Naive thymus-derived CD4-positive, alpha-beta T cell (primary cell): ENCODE measurements at regions of chr1 and their contacts with region 1.

Region 1: GRCh38 chr1:150561974-150562445 is 12.8 kb downstream of the ADAMTSL4 start:
- DNase-seq: peak; percentile 67 to 89 (median 83)
- ATAC-seq: peak; percentile 58
- H3K4me3 ChIP-seq: peak overlapping the region; percentile 95
- H3K4me3 Mint-ChIP-seq: peak overlapping the region; percentile 87 to 99 (median 97)
- H3K27ac ChIP-seq: peak overlapping the region; percentile 97
- H3K27ac Mint-ChIP-seq: peak overlapping the region; percentile 94 to 100 (median 98)
- H3K4me1 ChIP-seq: peaks cover 47 to 57% of the 10 kb centered on the region in 2 donors
- H3K4me1 Mint-ChIP-seq: peaks cover 26 to 59% (median 51%) of the 10 kb centered on the region in 7 donors
- H3K27me3 ChIP-seq: no peaks in the 10 kb centered on the region
- H3K27me3 Mint-ChIP-seq: no peaks in the 10 kb centered on the region

Region 2: DNA sequence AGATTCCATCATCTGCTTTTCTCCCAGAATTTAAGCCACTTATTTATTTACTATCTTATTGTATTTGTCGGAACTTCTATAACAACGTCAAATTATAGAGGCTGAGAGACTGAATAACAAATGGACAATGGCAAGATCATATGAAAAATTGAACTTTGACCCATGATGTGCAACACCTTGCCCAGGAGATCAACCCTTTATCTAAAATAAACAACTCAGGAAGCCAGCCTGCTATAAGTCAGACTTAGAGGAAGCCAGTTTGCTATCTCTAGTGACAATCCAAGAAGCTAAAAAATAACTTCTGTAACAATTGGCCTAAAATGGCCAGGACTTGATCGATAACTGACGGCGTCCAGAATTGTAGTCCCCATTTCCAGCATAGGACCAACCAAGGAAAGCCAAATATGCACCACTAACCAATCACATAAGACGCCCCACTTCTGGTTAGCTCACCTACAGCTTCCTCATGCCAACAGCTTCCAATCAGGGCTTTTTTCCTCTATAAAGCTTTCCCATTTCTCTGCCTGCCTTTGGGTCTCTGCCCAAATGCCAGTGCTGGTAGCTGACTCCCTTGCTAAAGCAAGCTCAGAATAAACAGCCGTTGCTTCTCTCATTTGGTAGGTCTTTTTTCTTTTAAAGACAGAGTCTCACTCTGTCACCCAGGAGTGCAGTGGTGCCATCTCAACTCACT is 354.6 kb before region 1 on chr1:
- CTCF ChIA-PET with region 1: no interaction called
- POLR2A ChIA-PET with region 1: no interaction called
- intact Hi-C with region 1: no loop called
- DNase-seq: no peak
- ATAC-seq: no peak
- H3K4me3 ChIP-seq: no peak overlapping the region
- H3K4me3 Mint-ChIP-seq: no peak overlapping the region
- H3K27ac ChIP-seq: no peak overlapping the region
- H3K27ac Mint-ChIP-seq: no peak overlapping the region
- H3K4me1 ChIP-seq: no peaks in the 10 kb centered on the region
- H3K4me1 Mint-ChIP-seq: no peaks in the 10 kb centered on the region
- H3K27me3 ChIP-seq: no peaks in the 10 kb centered on the region
- H3K27me3 Mint-ChIP-seq: peaks cover 0 to 30% (median 0%) of the 10 kb centered on the region in 5 donors

Region 3: GRCh38 chr1:150464422-150464826 is 97.6 kb before region 1 on chr1:
- CTCF ChIA-PET with region 1: interaction called, 4 read pairs
- POLR2A ChIA-PET with region 1: interaction called, 3 read pairs
- intact Hi-C with region 1: loop called (anchors 1 kb)
- DNase-seq: peak; percentile 36 to 76 (median 70)
- ATAC-seq: peak; percentile 90
- H3K4me3 ChIP-seq: no peak overlapping the region
- H3K4me3 Mint-ChIP-seq: peak overlapping the region in 1 of 10 donors; percentile 29
- H3K27ac ChIP-seq: no peak overlapping the region
- H3K27ac Mint-ChIP-seq: peak overlapping the region in 7 of 9 donors; percentile 12 to 86 (median 52)
- H3K4me1 ChIP-seq: no peaks in the 10 kb centered on the region
- H3K4me1 Mint-ChIP-seq: peaks cover 0 to 5% (median 5%) of the 10 kb centered on the region in 7 donors
- H3K27me3 ChIP-seq: no peaks in the 10 kb centered on the region
- H3K27me3 Mint-ChIP-seq: no peaks in the 10 kb centered on the region

Region 4: DNA sequence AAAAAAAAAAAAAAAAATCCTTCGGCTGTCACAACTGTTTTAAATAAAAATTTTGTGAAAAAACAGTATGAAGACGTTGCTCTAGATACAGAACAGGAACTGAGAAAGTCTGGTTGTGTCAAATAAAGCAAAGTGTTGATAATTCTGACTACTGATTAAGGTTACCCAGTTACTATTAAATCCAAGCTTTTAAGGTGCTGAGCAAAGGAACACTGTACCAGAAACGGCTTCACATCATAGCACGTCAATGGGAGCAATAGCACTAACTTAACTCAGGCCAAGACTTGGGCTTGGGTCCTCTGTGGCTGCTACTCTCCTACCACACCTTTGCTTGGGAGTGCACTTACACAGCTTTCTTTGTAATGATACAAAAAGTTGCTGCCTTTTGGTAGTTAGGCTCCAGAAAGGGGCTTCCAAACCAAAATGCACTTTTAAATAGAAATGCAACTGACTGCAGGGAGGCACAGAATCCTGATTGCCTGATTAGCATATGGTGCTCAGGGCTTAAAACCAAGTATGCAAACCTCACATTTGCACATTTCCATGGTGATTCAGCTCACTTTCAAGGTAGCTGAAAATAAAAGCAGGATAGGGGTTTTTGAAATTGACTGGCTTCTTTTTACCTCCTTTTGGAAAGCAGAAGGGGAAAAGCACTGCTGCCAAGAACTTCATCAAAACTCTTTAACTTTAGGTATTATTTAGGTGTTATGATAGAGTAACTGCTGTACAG is 11.1 kb after region 1 on chr1:
- CTCF ChIA-PET with region 1: interaction called, 300 read pairs
- POLR2A ChIA-PET with region 1: interaction called, 1,237 read pairs
- intact Hi-C with region 1: loop called (anchors 1 kb)
- DNase-seq: no peak
- ATAC-seq: peak; percentile 1
- H3K4me3 ChIP-seq: peak overlapping the region; percentile 56
- H3K4me3 Mint-ChIP-seq: peak overlapping the region; percentile 88 to 99 (median 94)
- H3K27ac ChIP-seq: peak overlapping the region; percentile 97
- H3K27ac Mint-ChIP-seq: peak overlapping the region; percentile 81 to 99 (median 97)
- H3K4me1 ChIP-seq: peaks cover 58 to 72% of the 10 kb centered on the region in 2 donors
- H3K4me1 Mint-ChIP-seq: peaks cover 40 to 75% (median 59%) of the 10 kb centered on the region in 7 donors
- H3K27me3 ChIP-seq: no peaks in the 10 kb centered on the region
- H3K27me3 Mint-ChIP-seq: peaks cover 0 to 5% (median 0%) of the 10 kb centered on the region in 5 donors

Region 5: GRCh38 chr1:150621497-150622302 is 59.7 kb after region 1 on chr1:
- CTCF ChIA-PET with region 1: interaction called, 272 read pairs
- POLR2A ChIA-PET with region 1: interaction called, 254 read pairs
- intact Hi-C with region 1: loop called (anchors 1 kb)
- DNase-seq: peak in 7 of 9 donors; percentile 53 to 74 (median 65)
- ATAC-seq: peak; percentile 78
- H3K4me3 ChIP-seq: no peak overlapping the region
- H3K4me3 Mint-ChIP-seq: peak overlapping the region in 8 of 10 donors; percentile 16 to 64 (median 46)
- H3K27ac ChIP-seq: peak overlapping the region; percentile 49
- H3K27ac Mint-ChIP-seq: peak overlapping the region; percentile 48 to 91 (median 83)
- H3K4me1 ChIP-seq: peaks cover 5 to 32% of the 10 kb centered on the region in 2 donors
- H3K4me1 Mint-ChIP-seq: peaks cover 17 to 65% (median 51%) of the 10 kb centered on the region in 7 donors
- H3K27me3 ChIP-seq: no peaks in the 10 kb centered on the region
- H3K27me3 Mint-ChIP-seq: no peaks in the 10 kb centered on the region

Region 6: GRCh38 chr1:150841626-150842025 is 279.6 kb after region 1 on chr1:
- CTCF ChIA-PET with region 1: no interaction called
- POLR2A ChIA-PET with region 1: no interaction called
- intact Hi-C with region 1: loop called in 1 of 2 experiments (anchors 5 kb)
- DNase-seq: peak in 7 of 9 donors; percentile 54 to 82 (median 70)
- ATAC-seq: peak; percentile 93
- H3K4me3 ChIP-seq: no peak overlapping the region
- H3K4me3 Mint-ChIP-seq: peak overlapping the region in 9 of 10 donors; percentile 10 to 66 (median 49)
- H3K27ac ChIP-seq: peak overlapping the region; percentile 63
- H3K27ac Mint-ChIP-seq: peak overlapping the region; percentile 49 to 94 (median 86)
- H3K4me1 ChIP-seq: peaks cover 0 to 29% of the 10 kb centered on the region in 2 donors
- H3K4me1 Mint-ChIP-seq: peaks cover 27 to 57% (median 49%) of the 10 kb centered on the region in 7 donors
- H3K27me3 ChIP-seq: no peaks in the 10 kb centered on the region
- H3K27me3 Mint-ChIP-seq: no peaks in the 10 kb centered on the region

Region 7: DNA sequence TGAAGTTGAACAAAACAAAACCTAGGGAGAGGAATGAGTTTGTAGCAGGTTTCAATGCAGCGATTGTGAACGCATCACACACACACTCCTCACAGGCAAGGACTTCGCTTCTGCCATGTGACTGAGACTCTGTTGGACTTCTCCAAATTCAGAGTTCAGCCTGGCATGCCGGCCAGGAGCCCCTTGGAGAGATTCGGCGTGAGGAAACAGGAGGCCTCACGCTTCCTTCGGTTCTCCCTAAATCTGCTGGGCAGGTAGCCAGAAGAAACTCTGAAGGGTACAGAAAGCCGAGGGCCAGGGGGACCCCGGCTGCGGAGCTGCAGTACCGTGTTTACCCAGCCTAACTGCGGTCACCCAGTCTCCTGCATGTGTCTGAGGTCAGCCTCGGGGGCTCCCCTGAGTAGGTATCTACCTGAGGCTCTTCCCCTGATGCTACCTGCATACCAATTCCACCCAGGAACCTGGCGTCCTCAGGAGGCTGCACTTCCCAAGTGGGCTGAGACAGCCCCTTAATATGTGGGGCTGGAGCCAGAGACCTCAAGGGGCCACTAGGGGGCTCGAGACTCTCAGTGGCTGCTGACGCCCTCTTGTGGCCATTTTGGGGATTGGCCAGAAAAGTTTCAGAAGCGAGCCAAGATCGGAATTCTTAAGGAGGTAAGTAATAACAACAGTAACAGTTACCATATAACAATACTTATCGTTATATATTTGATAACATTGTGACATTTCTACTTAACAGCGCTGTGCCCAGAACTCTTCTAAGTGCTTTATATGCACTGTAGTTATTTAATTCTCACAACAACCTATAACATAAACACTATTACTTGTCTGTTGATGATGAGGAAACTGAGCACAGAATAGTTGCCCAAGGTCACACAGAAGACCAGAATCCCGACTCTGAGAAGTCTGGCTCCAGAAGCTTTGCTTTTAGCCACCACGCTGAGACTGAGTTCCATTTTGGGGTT is 417.4 kb after region 1 on chr1:
- CTCF ChIA-PET with region 1: no interaction called
- POLR2A ChIA-PET with region 1: interaction called, 4 read pairs
- intact Hi-C with region 1: loop called in 1 of 2 experiments (anchors 10 kb)
- DNase-seq: peak; percentile 68 to 93 (median 84)
- ATAC-seq: peak; percentile 81
- H3K4me3 ChIP-seq: peak overlapping the region; percentile 39
- H3K4me3 Mint-ChIP-seq: peak overlapping the region in 9 of 10 donors; percentile 39 to 73 (median 61)
- H3K27ac ChIP-seq: peak overlapping the region; percentile 67
- H3K27ac Mint-ChIP-seq: peak overlapping the region; percentile 9 to 83 (median 62)
- H3K4me1 ChIP-seq: peaks cover 24 to 34% of the 10 kb centered on the region in 2 donors
- H3K4me1 Mint-ChIP-seq: peaks cover 14 to 44% (median 37%) of the 10 kb centered on the region in 7 donors
- H3K27me3 ChIP-seq: no peaks in the 10 kb centered on the region
- H3K27me3 Mint-ChIP-seq: no peaks in the 10 kb centered on the region

Region 8: DNA sequence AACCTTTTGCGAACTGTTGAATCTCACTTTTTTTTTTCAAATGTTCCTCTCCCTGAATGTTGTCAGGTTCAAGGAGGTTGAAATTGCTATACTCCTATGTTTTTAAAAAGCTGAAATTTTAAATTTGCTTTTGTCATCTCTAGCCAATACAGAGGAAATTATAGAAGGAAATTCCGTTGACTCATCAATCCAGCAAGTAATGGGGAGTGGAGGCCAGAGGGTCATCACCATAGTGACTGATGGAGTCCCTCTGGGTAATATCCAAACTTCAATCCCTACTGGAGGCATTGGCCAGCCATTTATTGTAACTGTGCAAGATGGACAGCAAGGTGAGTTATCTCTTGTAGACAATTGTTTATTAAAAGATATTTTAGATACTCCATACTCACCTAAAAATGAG is 544.9 kb after region 1 on chr1:
- CTCF ChIA-PET with region 1: no interaction called
- POLR2A ChIA-PET with region 1: no interaction called
- intact Hi-C with region 1: no loop called
- DNase-seq: no peak
- ATAC-seq: no peak
- H3K4me3 ChIP-seq: no peak overlapping the region
- H3K4me3 Mint-ChIP-seq: no peak overlapping the region
- H3K27ac ChIP-seq: no peak overlapping the region
- H3K27ac Mint-ChIP-seq: no peak overlapping the region
- H3K4me1 ChIP-seq: no peaks in the 10 kb centered on the region
- H3K4me1 Mint-ChIP-seq: no peaks in the 10 kb centered on the region
- H3K27me3 ChIP-seq: no peaks in the 10 kb centered on the region
- H3K27me3 Mint-ChIP-seq: no peaks in the 10 kb centered on the region

Region 9: DNA sequence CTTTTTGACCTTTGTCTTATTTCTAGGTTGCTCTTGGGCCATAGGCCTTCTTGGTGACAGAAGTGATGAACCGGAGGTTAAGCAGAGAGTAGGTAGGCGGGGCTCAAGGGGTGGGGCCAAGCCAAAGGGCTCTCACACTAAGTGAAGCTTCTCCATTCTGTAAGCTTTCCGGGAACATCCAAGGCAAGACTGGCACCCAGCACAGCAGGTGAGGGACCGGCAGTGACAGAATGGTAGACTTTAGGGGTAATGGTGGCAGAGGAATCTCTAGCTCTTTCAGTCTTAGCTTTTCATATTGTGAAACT is 594.5 kb after region 1 on chr1 and contains the start of gene TNFAIP8L2:
- CTCF ChIA-PET with region 1: interaction called, 5 read pairs
- POLR2A ChIA-PET with region 1: interaction called, 3 read pairs
- intact Hi-C with region 1: loop called in 1 of 2 experiments (anchors 1 kb)
- DNase-seq: peak in 7 of 9 donors; percentile 50 to 75 (median 66)
- ATAC-seq: peak; percentile 90
- H3K4me3 ChIP-seq: peak within 1 kb of the TSS; percentile 98
- H3K4me3 Mint-ChIP-seq: peak within 1 kb of the TSS; percentile 93 to 100 (median 99)
- H3K27ac ChIP-seq: peak within 1 kb of the TSS; percentile 78
- H3K27ac Mint-ChIP-seq: peak within 1 kb of the TSS; percentile 88 to 97 (median 95)
- H3K4me1 ChIP-seq: peaks cover 23 to 27% of the 10 kb centered on the region in 2 donors
- H3K4me1 Mint-ChIP-seq: peaks cover 34 to 61% (median 46%) of the 10 kb centered on the region in 7 donors
- H3K27me3 ChIP-seq: no peaks in the 10 kb centered on the region
- H3K27me3 Mint-ChIP-seq: no peaks in the 10 kb centered on the region
- total RNA-seq, gene TNFAIP8L2: 3.1 to 59.4 (median 37.6) TPM